ENCODE measurements at regions of chr20 and their contacts with region 1.

Region 1: GRCh38 chr20:37693635-37694626 is at the start of gene CTNNBL1:
- DNase-seq: peak; percentile 98
- H3K4me3 Mint-ChIP-seq: peak within 1 kb of the TSS; percentile 90
- H3K27ac Mint-ChIP-seq: peak within 1 kb of the TSS; percentile 81
- H3K4me1 Mint-ChIP-seq: peaks cover 24% of the 10 kb centered on the region
- H3K27me3 Mint-ChIP-seq: peaks cover 13% of the 10 kb centered on the region
- total RNA-seq, gene CTNNBL1: 72.5 to 76.5 TPM

Region 2: DNA sequence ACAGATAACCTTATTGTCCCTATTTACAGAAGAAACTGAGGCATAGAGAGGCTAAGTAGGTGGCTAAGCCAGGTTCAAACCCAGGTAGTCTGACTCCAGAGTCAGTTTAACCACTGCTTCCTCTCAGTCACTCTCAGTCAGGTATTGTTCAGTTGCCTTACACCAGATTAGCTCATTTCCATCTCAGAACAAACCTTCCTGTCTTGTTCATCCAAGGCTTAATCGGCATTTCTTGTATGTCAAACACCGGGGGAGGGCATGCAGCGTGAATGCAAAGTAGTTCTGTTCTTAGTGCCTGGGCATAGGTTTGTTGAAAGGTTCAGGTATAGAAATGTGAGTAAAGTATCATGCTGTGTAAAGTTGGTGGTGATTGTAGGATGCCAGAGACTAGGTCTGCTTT is 51.6 kb after region 1 on chr20:
- CTCF ChIA-PET with region 1: no interaction called
- POLR2A ChIA-PET with region 1: no interaction called
- intact Hi-C with region 1: loop called (anchors 2 kb)
- DNase-seq: peak; percentile 74
- H3K4me3 Mint-ChIP-seq: peak overlapping the region; percentile 9
- H3K27ac Mint-ChIP-seq: peak overlapping the region; percentile 83
- H3K4me1 Mint-ChIP-seq: peaks cover 29% of the 10 kb centered on the region
- H3K27me3 Mint-ChIP-seq: no peaks in the 10 kb centered on the region

Measured in activated CD4-positive, alpha-beta memory T cell treated with anti-CD3 and anti-CD28 coated beads for 36 hours (primary cell).